Mammary epithelial cell (primary cell): ENCODE measurements at regions of chr16 and their contacts with region 1.

Region 1: DNA sequence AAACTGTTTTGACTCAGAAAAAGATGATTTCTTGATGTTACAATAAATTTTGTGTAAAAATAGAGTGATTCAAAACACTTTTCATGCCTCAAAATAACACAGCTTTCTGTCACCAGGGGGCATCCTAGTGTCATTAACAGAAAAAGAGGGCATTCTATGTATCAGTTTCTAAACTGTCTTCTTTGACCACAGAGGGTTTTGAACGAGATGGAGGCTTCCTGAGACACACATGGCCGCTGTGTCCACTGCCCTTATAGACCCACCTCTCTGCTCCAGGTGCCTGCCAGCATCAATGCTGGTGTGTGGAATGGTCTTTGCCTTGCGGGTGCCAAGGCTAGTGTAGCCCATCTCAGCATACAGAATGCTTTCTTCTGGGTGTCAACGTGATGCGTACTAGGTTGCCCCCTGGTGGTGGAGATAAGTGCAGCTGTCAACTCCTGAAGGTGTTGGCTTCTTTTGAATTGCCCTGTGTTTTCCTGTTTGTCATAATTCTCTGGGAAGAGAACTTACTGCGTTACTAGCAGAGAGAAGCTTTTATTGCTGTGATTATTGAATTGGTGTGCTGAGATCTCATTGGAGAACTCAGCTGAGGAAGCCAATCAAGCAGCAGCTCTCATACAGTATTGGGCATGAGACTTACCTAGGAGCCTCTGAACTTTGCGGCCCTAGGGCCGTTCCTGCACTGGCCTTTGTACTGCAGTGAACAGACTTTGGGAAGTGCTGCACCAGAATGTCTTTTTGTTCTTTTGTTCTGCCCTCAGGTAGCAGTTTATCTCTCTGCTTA is 38.6 kb downstream of the USP10 start:
- DNase-seq: peak; percentile 72
- H3K4me3 ChIP-seq: no peak overlapping the region
- H3K27ac ChIP-seq: no peak overlapping the region
- H3K4me1 ChIP-seq: peaks cover 40% of the 10 kb centered on the region
- H3K27me3 ChIP-seq: no peaks in the 10 kb centered on the region
- CTCF ChIP-seq: peak; percentile 87 to 94

Region 2: DNA sequence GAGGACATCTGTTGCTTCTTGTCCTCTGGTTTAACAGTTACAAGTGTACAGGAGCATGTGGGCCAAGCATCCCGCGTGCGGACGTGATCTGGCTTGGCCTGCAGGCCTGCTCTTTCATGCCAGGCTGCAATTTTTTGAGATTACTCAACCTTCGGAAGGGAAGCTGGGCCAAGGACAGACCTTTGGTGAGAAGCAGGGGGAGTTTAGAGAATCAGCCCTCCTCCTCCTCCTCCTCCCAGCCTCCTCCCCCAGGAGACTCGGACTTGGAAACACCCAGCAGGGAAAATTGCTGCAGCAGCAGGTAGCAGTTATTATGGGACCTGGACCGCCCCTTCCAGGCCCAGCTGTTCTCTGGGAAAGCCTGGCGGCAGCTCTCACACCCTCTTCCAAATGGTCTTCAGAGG is 95.3 kb before region 1 on chr16:
- CTCF ChIA-PET with region 1: interaction called, 4 read pairs
- dilution Hi-C with region 1: loop called (anchors 5 kb)
- in situ Hi-C with region 1: no loop called
- intact Hi-C with region 1: no loop called
- DNase-seq: peak; percentile 88
- H3K4me3 ChIP-seq: peak overlapping the region in 1 of 3 experiments; percentile 27
- H3K27ac ChIP-seq: peak overlapping the region; percentile 44
- H3K4me1 ChIP-seq: peaks cover 44% of the 10 kb centered on the region
- H3K27me3 ChIP-seq: no peaks in the 10 kb centered on the region
- CTCF ChIP-seq: no peak

Region 3: DNA sequence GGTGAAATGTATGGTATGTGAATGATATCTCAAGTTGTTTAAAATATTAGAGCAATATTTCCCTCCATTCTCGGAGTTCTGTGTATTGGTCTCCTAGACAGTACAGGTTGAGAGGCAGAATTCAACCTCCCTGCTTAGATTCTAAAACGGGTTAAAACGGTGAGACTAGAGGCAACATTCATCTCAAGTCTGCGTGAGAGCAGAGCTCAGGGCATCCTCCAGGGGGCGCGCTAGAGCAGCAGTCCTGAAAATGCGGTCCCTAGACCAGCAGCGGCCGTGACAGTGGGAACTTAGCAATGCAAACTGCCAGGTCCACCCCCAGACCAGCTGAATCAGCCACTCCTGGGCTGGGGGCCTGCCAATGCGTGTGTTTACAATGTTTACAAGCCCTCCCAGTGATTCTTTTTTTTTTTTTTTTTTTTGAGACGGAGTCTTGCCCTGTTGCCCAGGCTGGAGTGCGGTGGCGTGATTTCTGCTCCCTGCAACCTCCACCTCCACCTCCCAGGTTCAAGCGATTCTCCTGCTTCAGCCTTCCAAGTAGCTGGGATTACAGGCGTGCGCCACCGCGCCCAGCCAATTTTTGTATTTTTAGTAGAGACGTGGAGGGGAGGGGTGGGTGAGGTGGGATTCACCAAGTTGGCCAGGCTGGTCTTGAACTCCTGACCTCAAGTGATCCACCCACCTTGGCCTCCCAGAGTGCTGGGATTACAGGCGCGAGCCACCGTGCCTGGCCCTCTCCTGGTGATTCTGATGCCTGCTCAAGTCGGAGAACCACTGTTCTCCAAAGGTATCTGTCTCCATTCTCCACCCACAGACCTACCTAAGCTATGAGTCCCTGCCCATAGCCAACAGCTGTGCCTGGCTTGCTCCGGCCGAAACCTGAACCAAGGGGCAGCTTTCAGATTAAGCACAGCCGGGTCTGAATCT is 65.9 kb before region 1 on chr16:
- CTCF ChIA-PET with region 1: no interaction called
- dilution Hi-C with region 1: no loop called
- in situ Hi-C with region 1: no loop called
- intact Hi-C with region 1: loop called (anchors 1 kb)
- DNase-seq: peak; percentile 39
- H3K4me3 ChIP-seq: no peak overlapping the region
- H3K27ac ChIP-seq: no peak overlapping the region
- H3K4me1 ChIP-seq: no peaks in the 10 kb centered on the region
- H3K27me3 ChIP-seq: no peaks in the 10 kb centered on the region
- CTCF ChIP-seq: peak; percentile 97

Region 4: GRCh38 chr16:84699712-84700445 is 38.6 kb before region 1 on chr16 and contains the start of gene USP10:
- CTCF ChIA-PET with region 1: no interaction called
- dilution Hi-C with region 1: loop called (anchors 5 kb)
- in situ Hi-C with region 1: no loop called
- intact Hi-C with region 1: loop called (anchors 2 kb)
- DNase-seq: peak; percentile 66
- H3K4me3 ChIP-seq: peak within 1 kb of the TSS; percentile 75 to 90 (median 86)
- H3K27ac ChIP-seq: peak within 1 kb of the TSS; percentile 71
- H3K4me1 ChIP-seq: peaks cover 4% of the 10 kb centered on the region
- H3K27me3 ChIP-seq: no peaks in the 10 kb centered on the region
- CTCF ChIP-seq: no peak
- total RNA-seq, gene USP10: 60.5 to 111 TPM

Region 5: DNA sequence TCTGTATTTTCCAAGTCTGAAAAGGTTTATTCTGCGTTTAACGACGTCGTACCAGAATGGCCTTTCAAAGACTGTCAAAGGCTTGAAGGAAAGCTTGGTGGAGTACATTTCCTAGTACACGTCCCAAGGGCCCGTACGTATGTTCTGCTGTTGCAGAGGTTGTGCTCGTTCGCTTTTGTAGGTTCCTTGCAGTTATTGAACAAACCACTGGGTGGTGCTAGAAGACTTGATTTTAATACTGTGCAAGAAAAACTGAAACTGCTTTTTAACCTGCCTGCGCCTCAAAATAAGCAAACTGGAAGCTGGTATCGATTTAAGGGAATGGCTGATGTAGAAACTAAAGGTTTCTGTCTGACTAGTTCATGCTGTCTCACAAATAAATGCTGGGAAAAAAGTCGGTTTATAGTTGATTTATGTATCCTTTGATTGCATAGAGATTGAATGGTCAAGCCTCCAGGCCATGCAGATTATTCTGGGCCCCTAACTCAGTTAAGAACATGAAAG is 16.0 kb after region 1 on chr16:
- CTCF ChIA-PET with region 1: interaction called, 11 read pairs
- dilution Hi-C with region 1: no loop called
- in situ Hi-C with region 1: no loop called
- intact Hi-C with region 1: no loop called
- DNase-seq: peak; percentile 84
- H3K4me3 ChIP-seq: peak overlapping the region in 2 of 3 experiments; percentile 6 to 34
- H3K27ac ChIP-seq: peak overlapping the region; percentile 85
- H3K4me1 ChIP-seq: peaks cover 35% of the 10 kb centered on the region
- H3K27me3 ChIP-seq: no peaks in the 10 kb centered on the region
- CTCF ChIP-seq: peak; percentile 77 to 80

Region 6: DNA sequence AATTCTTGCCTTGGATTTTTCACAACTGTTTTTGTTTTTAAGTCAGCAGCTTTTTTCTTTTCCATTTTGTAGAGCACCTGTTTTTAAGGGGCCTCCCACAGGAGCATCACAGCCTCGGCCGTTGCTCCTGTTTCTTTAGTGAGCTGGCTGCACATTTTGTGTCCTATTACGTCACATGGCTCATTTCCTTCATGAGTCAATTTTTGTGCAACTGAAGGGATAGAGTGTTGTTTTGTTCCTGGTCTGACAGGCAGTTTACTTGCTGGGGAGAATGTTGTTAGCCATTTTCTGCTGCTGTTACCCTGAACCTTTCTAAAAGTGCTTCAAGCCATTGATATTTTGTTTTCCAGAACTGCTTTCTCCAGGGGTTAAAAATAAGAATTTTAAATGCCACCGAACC is 36.4 kb after region 1 on chr16:
- CTCF ChIA-PET with region 1: no interaction called
- dilution Hi-C with region 1: no loop called
- in situ Hi-C with region 1: no loop called
- intact Hi-C with region 1: no loop called
- DNase-seq: peak; percentile 77
- H3K4me3 ChIP-seq: no peak overlapping the region
- H3K27ac ChIP-seq: no peak overlapping the region
- H3K4me1 ChIP-seq: no peaks in the 10 kb centered on the region
- H3K27me3 ChIP-seq: no peaks in the 10 kb centered on the region
- CTCF ChIP-seq: no peak

Region 7: GRCh38 chr16:84947022-84947421 is 208.6 kb after region 1 on chr16:
- CTCF ChIA-PET with region 1: no interaction called
- dilution Hi-C with region 1: loop called (anchors 10 kb)
- in situ Hi-C with region 1: no loop called
- intact Hi-C with region 1: no loop called
- DNase-seq: no peak
- H3K4me3 ChIP-seq: no peak overlapping the region
- H3K27ac ChIP-seq: no peak overlapping the region
- H3K4me1 ChIP-seq: peaks cover 4% of the 10 kb centered on the region
- H3K27me3 ChIP-seq: no peaks in the 10 kb centered on the region
- CTCF ChIP-seq: no peak